CD8-positive, alpha-beta T cell (primary cell): ENCODE measurements at regions of chr2 and their contacts with region 1.

Region 1: DNA sequence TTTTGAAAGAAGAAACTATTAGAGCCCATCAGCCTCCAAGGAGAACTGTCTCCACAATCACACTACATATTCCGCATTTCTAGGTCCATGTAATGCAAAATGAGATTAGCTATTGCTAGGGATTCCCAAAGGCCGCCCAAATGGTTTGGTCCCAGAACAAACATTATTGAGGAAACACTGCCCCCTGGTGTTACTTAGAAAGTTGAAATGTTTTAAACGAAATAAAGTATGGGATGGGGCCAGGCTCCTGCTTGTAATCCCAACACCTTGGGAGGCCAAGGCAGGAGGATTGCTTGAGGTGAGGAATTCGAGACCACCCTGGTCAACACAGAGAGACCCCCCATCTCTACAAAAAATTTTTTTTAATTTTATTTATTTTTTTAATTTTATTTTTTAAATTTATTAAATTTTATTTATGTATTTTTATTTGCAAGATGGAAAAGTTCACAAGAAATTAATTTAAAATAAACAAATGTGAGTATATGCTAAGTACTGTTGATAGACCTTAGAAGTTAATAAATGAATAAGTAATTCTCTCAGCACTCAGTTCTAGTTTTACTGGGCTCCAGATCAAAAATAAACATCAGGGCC is 5.5 kb downstream of the NHEJ1 start:
- DNase-seq: peak in 5 of 9 experiments; percentile 5 to 83 (median 52)
- ATAC-seq: peak; percentile 12
- H3K4me3 ChIP-seq: no peak overlapping the region
- H3K4me3 Mint-ChIP-seq: no peak overlapping the region
- H3K27ac ChIP-seq: no peak overlapping the region
- H3K27ac Mint-ChIP-seq: no peak overlapping the region
- H3K4me1 ChIP-seq: peaks cover 6% of the 10 kb centered on the region
- H3K4me1 Mint-ChIP-seq: peaks cover 7% of the 10 kb centered on the region
- H3K27me3 ChIP-seq: no peaks in the 10 kb centered on the region
- H3K27me3 Mint-ChIP-seq: no peaks in the 10 kb centered on the region
- CTCF ChIP-seq: peak; percentile 82

Region 2: GRCh38 chr2:218927422-218927821 is 227.7 kb before region 1 on chr2:
- CTCF ChIA-PET with region 1: no interaction called
- POLR2A ChIA-PET with region 1: no interaction called
- intact Hi-C with region 1: no loop called
- DNase-seq: no peak
- ATAC-seq: no peak
- H3K4me3 ChIP-seq: no peak overlapping the region
- H3K4me3 Mint-ChIP-seq: no peak overlapping the region
- H3K27ac ChIP-seq: no peak overlapping the region
- H3K27ac Mint-ChIP-seq: no peak overlapping the region
- H3K4me1 ChIP-seq: no peaks in the 10 kb centered on the region
- H3K4me1 Mint-ChIP-seq: no peaks in the 10 kb centered on the region
- H3K27me3 ChIP-seq: peaks cover 0 to 1% of the 10 kb centered on the region in 2 experiments
- H3K27me3 Mint-ChIP-seq: peaks cover 43% of the 10 kb centered on the region
- CTCF ChIP-seq: no peak

Region 3: DNA sequence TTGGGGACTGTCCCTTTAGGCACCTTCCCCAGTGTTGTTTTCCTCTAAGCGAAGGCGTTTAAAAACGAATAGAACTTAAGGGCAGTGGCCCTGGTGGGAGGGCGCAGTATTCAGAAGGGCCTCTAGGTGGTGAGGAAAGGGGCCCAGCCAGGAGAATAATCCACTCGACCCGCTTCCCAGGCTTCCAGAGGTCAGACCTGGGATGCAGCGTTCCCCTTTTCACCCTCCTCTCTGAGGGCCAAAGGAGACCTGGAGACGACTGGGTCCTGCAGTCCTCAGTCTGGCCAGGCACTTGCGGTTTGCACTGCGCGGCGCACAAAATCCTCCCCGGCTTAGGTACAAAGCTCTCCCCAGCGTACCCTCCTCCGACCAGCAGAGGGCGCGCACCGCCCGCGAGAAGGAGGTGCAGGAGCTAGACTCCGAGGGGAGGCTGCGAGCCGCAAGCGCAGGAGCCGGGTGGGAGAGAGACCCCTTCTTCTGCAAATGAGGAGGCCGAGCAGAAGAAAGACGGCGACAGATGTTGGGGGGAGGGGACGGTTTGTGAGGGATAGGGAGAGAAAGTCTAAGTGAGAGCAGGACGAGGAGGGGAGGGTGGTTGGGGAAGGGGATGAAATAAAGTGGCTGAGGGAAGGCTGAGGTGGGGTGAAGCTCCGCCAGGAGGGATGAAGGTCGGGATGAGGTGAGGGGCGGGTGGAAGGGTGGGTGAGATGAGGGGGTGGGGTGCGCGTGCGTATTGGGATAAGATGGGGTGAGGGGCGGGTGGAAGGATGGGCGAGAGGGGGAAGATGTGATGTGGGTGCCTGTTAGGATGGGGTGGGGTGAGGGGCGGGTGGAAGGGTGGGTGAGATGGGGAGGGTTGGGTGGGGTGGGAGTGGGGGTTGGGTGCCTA is 175.1 kb before region 1 on chr2:
- CTCF ChIA-PET with region 1: interaction called, 11 read pairs
- POLR2A ChIA-PET with region 1: no interaction called
- intact Hi-C with region 1: loop called in 1 of 2 experiments (anchors 1 kb)
- DNase-seq: peak; percentile 72 to 88 (median 83)
- ATAC-seq: peak; percentile 89
- H3K4me3 ChIP-seq: peak overlapping the region; percentile 3 to 18
- H3K4me3 Mint-ChIP-seq: peak overlapping the region; percentile 76
- H3K27ac ChIP-seq: no peak overlapping the region
- H3K27ac Mint-ChIP-seq: no peak overlapping the region
- H3K4me1 ChIP-seq: peaks cover 31% of the 10 kb centered on the region
- H3K4me1 Mint-ChIP-seq: peaks cover 34% of the 10 kb centered on the region
- H3K27me3 ChIP-seq: peaks cover 49% of the 10 kb centered on the region in 2 experiments
- H3K27me3 Mint-ChIP-seq: peaks cover 64% of the 10 kb centered on the region
- CTCF ChIP-seq: peak; percentile 94

Region 4: DNA sequence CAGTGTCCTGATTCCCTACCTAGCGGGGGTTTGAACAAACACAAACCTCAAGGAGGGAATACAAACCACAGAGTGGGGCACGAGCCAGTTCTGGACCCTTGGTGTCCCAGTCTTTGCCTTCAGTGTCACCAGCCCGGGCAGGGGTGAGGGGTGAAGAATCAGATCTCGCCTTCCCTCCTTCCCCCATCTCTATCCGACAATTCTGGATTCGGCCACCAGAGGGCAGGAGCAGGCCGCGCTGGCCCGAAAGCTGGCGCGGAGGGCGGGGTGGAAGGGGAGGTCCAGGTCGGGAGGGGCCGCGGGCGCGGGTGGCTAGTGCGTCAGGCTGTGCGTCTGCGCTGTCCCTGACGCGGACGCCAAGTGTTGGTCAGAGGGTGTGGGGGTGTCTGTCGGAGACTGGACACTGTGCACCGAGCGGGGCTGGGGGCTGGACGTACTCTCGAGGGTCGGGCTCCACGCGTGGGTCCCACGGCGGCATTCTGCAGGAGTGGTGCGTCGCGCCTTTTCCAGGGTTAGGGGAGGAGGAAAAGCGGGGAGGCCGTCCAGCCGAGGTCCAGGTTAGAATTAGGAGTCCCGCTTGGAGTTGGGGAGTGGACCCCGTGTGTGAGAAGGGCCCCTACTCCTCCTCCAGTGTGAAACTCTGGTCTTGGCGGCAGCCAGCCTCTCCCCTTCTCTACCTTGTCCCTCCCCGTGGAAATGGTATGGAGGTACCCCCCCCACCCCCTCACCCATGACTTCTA is 159.0 kb before region 1 on chr2:
- CTCF ChIA-PET with region 1: interaction called, 7 read pairs
- POLR2A ChIA-PET with region 1: no interaction called
- intact Hi-C with region 1: loop called in 1 of 2 experiments (anchors 10 kb)
- DNase-seq: peak; percentile 58 to 83 (median 78)
- ATAC-seq: peak; percentile 80
- H3K4me3 ChIP-seq: peak overlapping the region in 1 of 2 experiments; percentile 34
- H3K4me3 Mint-ChIP-seq: peak overlapping the region; percentile 22
- H3K27ac ChIP-seq: no peak overlapping the region
- H3K27ac Mint-ChIP-seq: no peak overlapping the region
- H3K4me1 ChIP-seq: peaks cover 17% of the 10 kb centered on the region
- H3K4me1 Mint-ChIP-seq: peaks cover 9% of the 10 kb centered on the region
- H3K27me3 ChIP-seq: peaks cover 29 to 39% of the 10 kb centered on the region in 2 experiments
- H3K27me3 Mint-ChIP-seq: peaks cover 67% of the 10 kb centered on the region
- CTCF ChIP-seq: peak; percentile 75

Region 5: DNA sequence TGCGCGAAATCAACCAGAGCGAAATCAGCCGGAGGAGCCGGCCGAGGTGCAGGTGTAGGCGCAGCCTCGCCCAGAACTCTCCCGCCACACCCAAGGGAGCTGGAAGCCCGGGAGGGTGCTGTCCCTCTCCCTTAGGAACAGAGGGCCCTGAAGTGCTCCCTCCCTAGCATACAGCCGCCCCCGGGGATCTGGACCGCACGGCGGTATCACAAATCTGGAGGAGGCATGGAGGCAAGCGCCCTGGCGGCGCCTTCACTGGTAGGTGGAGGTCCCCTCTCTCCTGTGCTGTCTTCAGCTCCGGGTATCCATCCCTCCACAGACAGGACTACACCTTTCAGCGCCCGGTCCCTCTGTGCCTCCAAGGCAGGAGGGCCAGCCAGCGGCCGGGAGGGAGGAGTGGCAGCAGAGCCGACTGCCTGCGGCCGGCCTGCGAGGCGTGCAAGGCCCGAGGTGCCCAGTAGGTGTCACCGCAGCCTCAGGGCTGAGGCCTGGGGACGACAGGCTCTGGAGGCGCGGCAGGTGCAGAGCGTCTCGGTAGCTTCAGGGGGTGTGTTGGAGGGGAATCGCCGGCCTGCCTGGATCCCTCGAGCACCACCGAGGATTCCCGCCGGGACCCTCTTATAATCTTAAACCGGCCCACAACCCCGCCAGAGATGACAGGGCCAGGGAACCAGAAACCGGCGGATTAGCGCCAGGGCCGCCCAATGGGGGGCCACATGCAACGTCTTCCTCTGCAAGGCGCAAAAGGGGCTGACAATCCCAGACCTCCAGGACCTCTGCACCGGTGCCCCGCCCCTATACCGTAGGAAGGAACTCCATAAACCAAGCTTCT is 97.2 kb before region 1 on chr2:
- CTCF ChIA-PET with region 1: interaction called, 98 read pairs
- POLR2A ChIA-PET with region 1: interaction called, 5 read pairs
- intact Hi-C with region 1: loop called (anchors 1 kb)
- DNase-seq: peak; percentile 62 to 85 (median 74)
- ATAC-seq: peak; percentile 96
- H3K4me3 ChIP-seq: no peak overlapping the region
- H3K4me3 Mint-ChIP-seq: peak overlapping the region; percentile 55
- H3K27ac ChIP-seq: no peak overlapping the region
- H3K27ac Mint-ChIP-seq: no peak overlapping the region
- H3K4me1 ChIP-seq: peaks cover 35% of the 10 kb centered on the region
- H3K4me1 Mint-ChIP-seq: peaks cover 26% of the 10 kb centered on the region
- H3K27me3 ChIP-seq: peaks cover 26 to 37% of the 10 kb centered on the region in 2 experiments
- H3K27me3 Mint-ChIP-seq: peaks cover 58% of the 10 kb centered on the region
- CTCF ChIP-seq: peak; percentile 92